OCI-LY7 (cell line): ENCODE measurements at regions of chr19 and their contacts with region 1.

Region 1: GRCh38 chr19:4831304-4831978 is at the start of gene TICAM1:
- DNase-seq: peak; percentile 70
- H3K4me3 ChIP-seq: peak within 1 kb of the TSS; percentile 76
- H3K27ac ChIP-seq: peak within 1 kb of the TSS; percentile 77
- H3K4me1 ChIP-seq: peaks cover 46% of the 10 kb centered on the region
- CTCF ChIP-seq: 0 out of 2 replicates have a peak, but pooled peaks have one; percentile 28
- total RNA-seq, gene TICAM1: 4.9 and 6.8 TPM in 2 replicates

Region 2: DNA sequence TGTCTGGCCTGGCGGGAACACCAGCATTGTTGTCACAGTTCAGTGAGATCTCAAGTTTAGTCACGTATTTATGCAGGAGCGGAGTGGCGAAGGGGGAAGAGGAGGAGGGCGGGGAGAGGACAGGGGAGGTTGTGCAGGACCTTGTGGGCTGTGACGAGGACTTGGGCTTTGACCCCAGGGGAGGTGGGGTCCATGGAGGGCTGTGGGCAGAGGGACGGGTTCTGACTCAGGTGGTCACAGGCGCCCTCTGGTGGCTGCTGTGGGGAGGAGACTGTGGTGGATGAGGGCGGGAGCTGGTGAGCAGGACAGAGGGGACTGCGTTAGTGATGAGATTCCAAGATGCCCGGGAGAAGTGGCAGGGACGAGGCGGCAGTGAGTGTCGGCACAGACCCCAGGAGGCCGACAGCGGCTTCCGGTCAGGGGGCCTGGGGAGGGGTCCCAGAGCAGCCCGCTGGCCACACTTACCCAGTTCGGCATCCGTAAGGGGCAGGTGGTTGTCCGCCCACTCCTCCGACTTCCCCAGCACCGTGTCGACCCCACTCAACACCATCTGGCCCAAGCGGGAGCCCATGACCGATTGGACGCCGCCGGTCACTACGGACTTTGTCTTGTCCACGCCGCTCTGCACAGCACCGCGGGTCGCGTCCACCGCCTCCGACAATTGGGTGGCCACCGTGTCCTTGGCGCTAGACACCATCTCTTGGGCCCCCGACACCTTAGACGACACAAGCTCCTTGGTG is 20.3 kb after region 1 on chr19:
- CTCF ChIA-PET with region 1: no interaction called
- POLR2A ChIA-PET with region 1: interaction called, 7 read pairs
- intact Hi-C with region 1: loop called (anchors 1 kb)
- DNase-seq: peak; percentile 77
- H3K4me3 ChIP-seq: no peak overlapping the region
- H3K27ac ChIP-seq: peak overlapping the region; percentile 91
- H3K4me1 ChIP-seq: peaks cover 43% of the 10 kb centered on the region
- CTCF ChIP-seq: peak; percentile 92

Region 3: GRCh38 chr19:5186293-5187050 is 355.0 kb after region 1 on chr19:
- CTCF ChIA-PET with region 1: no interaction called
- POLR2A ChIA-PET with region 1: no interaction called
- intact Hi-C with region 1: no loop called
- DNase-seq: no peak
- H3K4me3 ChIP-seq: no peak overlapping the region
- H3K27ac ChIP-seq: no peak overlapping the region
- H3K4me1 ChIP-seq: no peaks in the 10 kb centered on the region
- CTCF ChIP-seq: no peak